Ascending aorta (tissue), 2 donors: ENCODE measurements at regions of chr14 and their contacts with region 1.

Region 1: DNA sequence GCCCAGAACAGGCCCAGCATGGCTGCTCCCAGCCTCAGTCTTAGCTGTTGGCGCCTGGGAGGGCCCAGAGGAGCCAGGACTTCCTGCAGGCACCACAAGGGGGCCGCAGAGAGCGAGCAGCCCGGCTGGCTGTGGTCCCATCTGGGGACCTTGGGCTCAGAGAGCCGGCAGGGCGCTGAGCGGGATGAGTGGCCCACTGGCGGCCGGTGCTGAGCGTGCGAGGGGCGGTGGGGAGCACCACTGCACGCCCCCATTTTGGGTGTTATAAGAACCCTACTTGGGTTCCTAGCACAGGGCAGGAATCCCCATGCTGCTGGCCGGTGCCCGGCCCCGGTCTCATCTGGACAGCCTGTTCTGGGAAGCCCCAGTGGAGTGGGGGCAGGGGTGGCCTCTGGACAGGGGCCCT is 25.9 kb upstream of the CRIP2 start:
- DNase-seq: peak in 1 of 2 donors; percentile 85
- H3K4me3 ChIP-seq: no peak overlapping the region
- H3K27ac ChIP-seq: peak overlapping the region; percentile 45 to 49
- H3K4me1 ChIP-seq: peaks cover 3 to 10% of the 10 kb centered on the region in 2 donors
- H3K27me3 ChIP-seq: no peaks in the 10 kb centered on the region
- CTCF ChIP-seq: peak; percentile 92 to 98 (median 94)

Region 2: DNA sequence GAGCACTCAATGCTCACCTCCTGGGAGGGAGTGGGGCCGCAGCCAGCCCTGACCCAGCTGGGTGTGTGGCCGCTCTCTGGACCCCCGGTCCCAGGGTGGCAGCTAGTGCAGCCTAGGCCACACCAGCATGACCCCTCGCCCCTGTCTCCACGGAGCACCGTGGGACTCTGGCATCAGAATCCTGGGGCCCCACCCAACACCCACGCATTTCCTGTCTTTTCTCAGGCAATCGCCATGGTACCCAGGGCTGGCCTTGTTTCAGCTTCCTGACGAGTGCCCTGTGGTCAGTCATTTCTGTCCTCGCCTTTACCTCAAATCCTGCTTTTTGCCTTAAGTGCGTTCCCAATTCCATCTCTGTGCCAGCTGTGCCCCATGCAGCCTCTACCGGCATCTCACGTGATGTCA is 118.2 kb before region 1 on chr14:
- intact Hi-C with region 1: no loop called
- DNase-seq: peak in 1 of 2 donors; percentile 73
- H3K4me3 ChIP-seq: no peak overlapping the region
- H3K27ac ChIP-seq: peak overlapping the region; percentile 47 to 66
- H3K4me1 ChIP-seq: peaks cover 0 to 6% of the 10 kb centered on the region in 2 donors
- H3K27me3 ChIP-seq: no peaks in the 10 kb centered on the region
- CTCF ChIP-seq: no peak

Region 3: DNA sequence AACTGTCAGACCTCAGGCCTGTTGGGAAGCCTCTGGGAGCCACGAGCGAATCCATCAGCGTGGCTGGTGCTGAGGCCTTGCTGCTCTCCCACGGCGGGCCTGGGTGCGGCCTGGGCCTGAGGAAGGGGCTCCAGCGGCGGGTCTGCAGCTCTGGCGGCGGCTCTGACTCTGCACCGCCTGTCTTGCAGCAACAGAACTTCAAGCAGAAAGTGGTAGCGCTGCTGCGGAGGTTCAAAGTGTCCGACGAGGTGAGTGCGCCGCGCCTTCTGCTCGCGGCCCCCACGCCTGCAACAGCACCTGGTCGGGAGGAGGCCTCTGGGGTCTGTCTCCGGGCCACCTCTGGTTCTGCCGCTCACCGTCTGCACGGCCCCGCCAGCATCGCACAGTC is 79.1 kb before region 1 on chr14:
- intact Hi-C with region 1: loop called (anchors 2 kb)
- DNase-seq: no peak
- H3K4me3 ChIP-seq: no peak overlapping the region
- H3K27ac ChIP-seq: no peak overlapping the region
- H3K4me1 ChIP-seq: no peaks in the 10 kb centered on the region
- H3K27me3 ChIP-seq: no peaks in the 10 kb centered on the region
- CTCF ChIP-seq: no peak

Region 4: GRCh38 chr14:105468603-105469241 is 20.0 kb after region 1 on chr14:
- intact Hi-C with region 1: loop called (anchors 2 kb)
- DNase-seq: no peak
- H3K4me3 ChIP-seq: no peak overlapping the region
- H3K27ac ChIP-seq: peak overlapping the region; percentile 46 to 89
- H3K4me1 ChIP-seq: peaks cover 21 to 37% of the 10 kb centered on the region in 2 donors
- H3K27me3 ChIP-seq: no peaks in the 10 kb centered on the region
- CTCF ChIP-seq: peak in 1 of 3 experiments; percentile 15